T-cell (primary cell): ENCODE measurements at regions of chr14 and their contacts with region 1.

Region 1: GRCh38 chr14:32217301-32217700 is 14.2 kb upstream of the RNU6-8 start:
- DNase-seq: no peak
- ATAC-seq: peak in 1 of 4 experiments; percentile 47
- H3K4me3 ChIP-seq: no peak overlapping the region
- H3K4me3 Mint-ChIP-seq: no peak overlapping the region
- H3K27ac ChIP-seq: no peak overlapping the region
- H3K27ac Mint-ChIP-seq: no peak overlapping the region
- H3K4me1 ChIP-seq: no peaks in the 10 kb centered on the region
- H3K4me1 Mint-ChIP-seq: peaks cover 1 to 9% (median 3%) of the 10 kb centered on the region in 3 donors
- H3K27me3 ChIP-seq: peaks cover 0 to 4% of the 10 kb centered on the region in 2 experiments
- H3K27me3 Mint-ChIP-seq: peaks cover 4 to 9% of the 10 kb centered on the region in 2 donors

Region 2: GRCh38 chr14:32134448-32135070 is 82.7 kb before region 1 on chr14:
- CTCF ChIA-PET with region 1: no interaction called
- POLR2A ChIA-PET with region 1: interaction called in 1 of 2 experiments, 13 read pairs
- DNase-seq: no peak
- ATAC-seq: no peak
- H3K4me3 ChIP-seq: no peak overlapping the region
- H3K4me3 Mint-ChIP-seq: no peak overlapping the region
- H3K27ac ChIP-seq: no peak overlapping the region
- H3K27ac Mint-ChIP-seq: no peak overlapping the region
- H3K4me1 ChIP-seq: no peaks in the 10 kb centered on the region
- H3K4me1 Mint-ChIP-seq: peaks cover 0 to 14% (median 2%) of the 10 kb centered on the region in 3 donors
- H3K27me3 ChIP-seq: no peaks in the 10 kb centered on the region
- H3K27me3 Mint-ChIP-seq: no peaks in the 10 kb centered on the region